Activated naive CD4-positive, alpha-beta T cell treated with anti-CD3 and anti-CD28 coated beads for 36 hours (primary cell): ENCODE measurements at regions of chr17 and their contacts with region 1.

Region 1: DNA sequence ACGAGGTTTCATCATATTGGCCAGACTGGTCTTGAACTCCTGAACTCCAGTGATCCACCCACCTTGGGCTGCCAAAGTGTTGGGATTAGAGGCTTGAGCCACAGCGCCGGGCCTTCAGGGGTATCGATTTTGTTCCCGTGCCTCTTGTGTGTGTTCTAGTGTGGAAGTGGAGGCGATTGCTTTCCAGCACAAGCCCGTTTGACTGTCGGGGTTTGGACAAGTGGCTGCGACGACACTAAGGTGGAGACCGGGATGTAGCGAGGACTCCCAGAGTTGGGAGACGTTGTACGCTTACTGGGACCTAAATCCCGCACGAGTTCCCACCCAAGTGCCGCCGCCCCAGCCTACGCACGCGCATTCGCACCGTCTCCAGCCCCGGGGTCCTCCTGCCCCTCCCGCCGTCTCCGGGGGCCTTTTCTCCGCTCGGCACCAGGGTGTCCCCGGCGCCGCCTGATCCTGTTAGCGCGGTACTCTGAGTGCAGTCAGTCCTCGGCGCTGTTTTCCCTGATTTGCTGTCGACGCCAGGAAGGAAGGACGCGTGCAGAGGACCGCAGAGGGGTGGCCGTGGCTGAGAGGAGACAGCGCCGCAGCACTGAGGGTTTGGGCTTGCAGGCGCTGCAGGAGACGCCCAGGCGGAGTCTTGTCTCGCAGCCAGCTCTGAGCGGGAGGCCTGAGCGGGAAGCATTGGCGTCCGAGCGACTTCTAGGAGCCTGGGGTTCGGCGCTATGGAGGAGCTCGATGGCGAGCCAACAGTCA is at the start of gene NUP85:
- DNase-seq: peak; percentile 94
- H3K4me3 Mint-ChIP-seq: peak within 1 kb of the TSS; percentile 98
- H3K27ac Mint-ChIP-seq: peak within 1 kb of the TSS; percentile 98
- H3K4me1 Mint-ChIP-seq: peaks cover 24% of the 10 kb centered on the region
- H3K27me3 Mint-ChIP-seq: no peaks in the 10 kb centered on the region
- total RNA-seq, gene NUP85: 112 to 116 TPM

Region 2: GRCh38 chr17:74873038-74873873 is 332.0 kb before region 1 on chr17:
- CTCF ChIA-PET with region 1: no interaction called
- intact Hi-C with region 1: no loop called
- DNase-seq: peak; percentile 100
- H3K4me3 Mint-ChIP-seq: peak overlapping the region; percentile 88
- H3K27ac Mint-ChIP-seq: peak overlapping the region; percentile 91
- H3K4me1 Mint-ChIP-seq: peaks cover 27% of the 10 kb centered on the region
- H3K27me3 Mint-ChIP-seq: no peaks in the 10 kb centered on the region

Region 3: DNA sequence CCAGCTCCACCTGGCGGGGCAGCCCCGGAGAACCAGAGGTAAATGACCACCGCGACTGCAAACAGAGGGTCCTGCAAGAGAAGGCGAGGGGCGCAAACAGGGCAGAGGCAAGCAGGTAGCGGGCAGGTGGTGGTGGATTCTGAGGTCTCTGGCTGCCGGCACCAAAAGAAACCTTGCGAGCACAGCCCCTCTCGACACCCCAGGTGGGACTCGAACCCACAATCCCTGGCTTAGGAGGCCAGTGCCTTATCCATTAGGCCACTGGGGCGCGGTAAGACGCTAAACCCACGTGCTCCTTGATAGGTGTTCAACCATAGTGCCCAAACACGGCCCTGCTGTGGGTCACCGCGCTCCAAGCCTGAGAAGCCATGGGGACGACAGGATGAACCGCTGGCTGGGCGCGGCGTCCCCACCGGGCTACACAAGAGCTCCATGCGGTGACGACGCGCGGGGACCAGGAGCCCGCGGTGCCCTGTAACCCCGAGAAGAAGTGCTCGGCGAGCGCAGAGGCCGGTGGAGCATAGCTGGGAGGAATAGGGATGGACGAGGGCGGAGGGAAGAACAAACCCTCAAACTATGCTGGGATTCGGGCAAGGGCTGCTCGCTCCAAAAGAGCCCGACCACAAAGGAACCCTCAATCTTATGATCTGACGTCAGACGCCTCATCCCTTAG is 170.8 kb before region 1 on chr17:
- CTCF ChIA-PET with region 1: interaction called, 6 read pairs
- intact Hi-C with region 1: loop called (anchors 1 kb)
- DNase-seq: peak; percentile 96
- H3K4me3 Mint-ChIP-seq: peak overlapping the region; percentile 95
- H3K27ac Mint-ChIP-seq: peak overlapping the region; percentile 93
- H3K4me1 Mint-ChIP-seq: peaks cover 46% of the 10 kb centered on the region
- H3K27me3 Mint-ChIP-seq: peaks cover 3% of the 10 kb centered on the region

Region 4: DNA sequence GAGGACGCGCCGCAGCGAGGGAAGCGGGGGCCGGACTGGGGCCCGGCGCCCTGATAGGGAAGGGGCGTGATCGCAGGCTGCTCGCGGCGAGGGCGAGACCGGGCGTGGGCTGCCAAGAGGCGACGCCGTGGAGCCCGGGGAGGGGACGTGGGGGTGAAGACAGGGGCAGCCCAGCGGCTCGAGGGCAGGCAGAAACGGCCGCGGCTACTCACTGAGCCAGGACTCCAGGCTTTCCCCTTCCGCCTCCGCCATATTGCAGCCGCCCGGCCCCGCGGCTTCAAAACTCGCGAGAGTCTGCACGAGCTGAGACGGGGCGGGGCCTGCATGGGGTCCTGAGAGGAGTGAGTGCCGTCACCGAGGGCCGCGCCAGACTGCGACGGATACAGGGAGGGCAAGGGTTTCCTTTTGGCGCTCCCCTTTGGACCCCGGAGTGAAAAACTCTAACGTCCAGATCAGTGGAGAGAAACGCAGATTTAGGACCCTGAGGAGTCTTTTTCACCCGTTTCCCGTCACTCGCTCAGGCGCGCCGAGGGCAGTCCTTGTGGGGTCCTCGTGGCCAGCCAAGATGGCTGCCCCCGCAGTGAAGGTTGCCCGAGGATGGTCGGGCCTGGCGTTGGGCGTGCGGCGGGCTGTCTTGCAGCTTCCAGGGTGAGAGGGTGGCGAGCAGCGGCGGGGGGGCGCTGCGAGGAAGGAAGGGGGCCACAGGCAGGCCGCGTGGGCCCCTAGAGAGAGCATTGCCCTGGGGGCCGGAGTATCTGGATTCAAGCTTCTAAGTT is 56.3 kb after region 1 on chr17 and contains the starts of genes GGA3 and MRPS7:
- CTCF ChIA-PET with region 1: interaction called, 3 read pairs
- intact Hi-C with region 1: loop called (anchors 1 kb)
- DNase-seq: peak; percentile 98
- H3K4me3 Mint-ChIP-seq: peak within 1 kb of the TSS; percentile 93
- H3K27ac Mint-ChIP-seq: peak within 1 kb of the TSS; percentile 99
- H3K4me1 Mint-ChIP-seq: peaks cover 53% of the 10 kb centered on the region
- H3K27me3 Mint-ChIP-seq: no peaks in the 10 kb centered on the region
- total RNA-seq, gene GGA3: 65.7 to 66.1 TPM
- total RNA-seq, gene MRPS7: 73.3 to 78.3 TPM

Region 5: GRCh38 chr17:75271233-75271954 is 66.2 kb after region 1 on chr17:
- CTCF ChIA-PET with region 1: interaction called, 13 read pairs
- intact Hi-C with region 1: no loop called
- DNase-seq: peak; percentile 83
- H3K4me3 Mint-ChIP-seq: peak overlapping the region; percentile 76
- H3K27ac Mint-ChIP-seq: peak overlapping the region; percentile 70
- H3K4me1 Mint-ChIP-seq: peaks cover 35% of the 10 kb centered on the region
- H3K27me3 Mint-ChIP-seq: no peaks in the 10 kb centered on the region